Heart right ventricle (tissue), 16 donors: ENCODE measurements at regions of chr2 and their contacts with region 1.

Region 1: DNA sequence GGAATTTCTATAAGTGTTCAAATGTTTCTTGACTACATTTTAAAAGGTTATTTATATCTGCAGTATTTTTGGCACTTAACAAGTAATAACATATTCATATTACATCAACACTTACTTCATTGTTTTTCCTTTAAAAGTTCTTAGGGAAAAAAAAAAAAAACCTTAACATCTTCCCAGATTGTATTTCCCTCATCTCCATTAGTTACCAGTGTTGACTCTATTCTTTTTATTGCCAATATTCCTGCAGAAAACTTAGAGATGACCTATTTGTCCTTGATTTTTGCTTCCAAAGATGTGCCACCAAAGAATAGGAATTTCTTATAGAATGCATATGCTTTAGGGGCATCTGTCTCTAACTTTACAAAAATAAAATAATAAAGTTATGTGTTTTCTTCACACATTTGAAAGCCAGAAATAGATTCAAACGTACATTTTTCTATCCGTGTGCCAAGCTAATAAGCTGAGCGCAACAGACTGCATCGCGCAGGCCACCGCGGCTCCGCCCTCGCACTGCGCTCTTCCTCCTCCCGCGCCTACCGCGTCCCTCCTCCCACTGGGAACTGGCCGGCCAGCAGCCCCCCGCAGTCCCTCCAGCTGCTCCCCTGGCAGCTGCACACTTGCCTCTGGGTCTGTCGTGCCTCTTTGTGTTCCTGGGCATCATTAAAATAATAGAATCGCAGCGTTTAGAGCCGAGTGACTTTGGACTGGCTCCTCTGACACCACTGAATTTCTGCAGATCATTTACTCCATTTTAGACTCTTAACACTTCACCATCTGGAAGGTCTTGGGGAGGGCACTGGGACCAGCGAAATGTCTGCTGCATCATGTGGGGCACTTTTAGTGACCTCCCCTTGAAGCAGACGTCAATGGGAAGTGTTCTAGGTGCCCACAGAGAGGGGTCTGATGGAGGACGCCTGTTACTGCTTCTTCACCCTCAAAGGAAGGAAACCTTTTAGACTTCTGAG is 21.2 kb upstream of the NAB1 start:
- DNase-seq: peak; percentile 59 to 62
- ATAC-seq: peak; percentile 85 to 93 (median 90)
- H3K4me3 ChIP-seq: peak overlapping the region in 9 of 10 donors; percentile 33 to 60 (median 56)
- H3K27ac ChIP-seq: peak overlapping the region; percentile 66 to 89 (median 78)
- H3K4me1 ChIP-seq: peaks cover 0 to 36% (median 18%) of the 10 kb centered on the region in 9 donors
- H3K27me3 ChIP-seq: no peaks in the 10 kb centered on the region
- CTCF ChIP-seq: no peak

Region 2: DNA sequence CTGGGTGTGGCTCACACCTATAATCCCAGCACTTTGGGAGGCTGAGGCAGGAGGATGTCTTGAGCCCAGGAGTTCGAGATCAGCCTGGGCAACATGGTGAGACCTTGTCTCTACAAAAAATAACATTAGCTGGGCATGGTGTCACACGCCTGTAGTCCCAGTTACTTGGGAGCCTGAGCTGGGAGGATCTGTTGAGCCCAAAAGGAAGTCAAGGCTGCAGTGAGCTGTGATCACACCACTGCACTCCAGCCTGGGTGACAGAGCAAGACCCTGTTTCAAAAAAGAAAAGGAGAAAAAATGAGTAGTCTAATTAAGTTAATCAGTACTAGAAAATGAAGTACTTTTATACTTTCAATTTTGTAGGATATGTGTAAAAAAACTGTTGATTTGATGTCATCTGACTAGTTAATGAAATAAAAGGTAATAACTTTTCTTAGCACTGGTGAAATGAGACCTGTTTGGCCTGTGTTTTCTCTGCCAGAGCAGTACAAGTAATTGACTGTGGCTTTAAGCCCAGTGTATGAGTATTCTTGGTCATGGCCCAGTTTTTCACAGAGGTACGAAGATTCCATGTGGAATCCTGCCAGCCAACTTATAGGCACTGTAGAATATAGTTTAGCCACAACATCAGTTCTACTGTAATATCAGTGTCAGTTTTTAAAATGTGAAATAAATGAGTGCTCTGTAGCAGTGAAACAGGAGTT is 183.8 kb before region 1 on chr2:
- intact Hi-C with region 1: no loop called
- DNase-seq: no peak
- ATAC-seq: no peak
- H3K4me3 ChIP-seq: no peak overlapping the region
- H3K27ac ChIP-seq: peak overlapping the region in 1 of 10 donors; percentile 20
- H3K4me1 ChIP-seq: peaks cover 5 to 85% (median 39%) of the 10 kb centered on the region in 9 donors
- H3K27me3 ChIP-seq: no peaks in the 10 kb centered on the region
- CTCF ChIP-seq: no peak

Region 3: DNA sequence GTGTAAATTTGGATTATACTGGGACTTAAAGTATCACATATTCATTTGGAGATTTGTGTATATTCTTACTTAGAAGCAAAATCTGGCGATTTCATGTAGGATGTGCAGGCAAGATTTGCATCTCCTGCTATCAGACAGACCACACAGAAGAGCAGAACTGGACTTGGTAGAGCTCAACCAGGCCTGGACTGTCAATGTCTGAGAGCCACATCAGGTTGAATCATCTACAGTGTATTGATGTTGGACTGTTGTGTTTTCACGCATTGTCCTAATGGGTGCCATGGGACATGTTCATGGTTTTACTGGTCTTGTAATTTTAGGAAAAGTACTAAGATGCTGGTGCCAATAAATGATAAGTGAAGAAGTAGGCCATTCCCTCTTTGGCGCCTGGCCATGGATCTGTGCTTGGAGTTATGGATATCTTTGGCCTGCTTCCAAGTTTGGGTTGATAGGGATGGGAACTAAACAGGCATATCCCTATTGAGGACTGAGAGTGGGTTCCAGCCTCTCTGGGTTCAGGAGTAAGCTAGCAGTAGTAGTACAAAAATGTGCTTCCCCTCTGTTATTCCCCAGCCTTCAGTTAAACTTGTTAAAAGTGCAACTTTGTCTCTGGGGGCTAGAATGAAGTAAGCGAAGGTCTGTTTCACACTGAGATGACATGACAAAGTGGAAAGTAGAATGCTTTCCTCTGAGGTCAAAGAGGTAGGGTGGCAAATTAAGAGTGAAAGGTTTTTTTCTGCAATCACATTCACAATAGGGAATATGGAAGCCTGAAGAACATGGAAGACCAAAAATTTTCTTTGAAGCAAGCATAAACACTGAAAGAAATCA is 44.0 kb before region 1 on chr2:
- intact Hi-C with region 1: loop called in 1 of 10 experiments (anchors 5 kb)
- DNase-seq: peak; percentile 66 to 72
- ATAC-seq: peak; percentile 35 to 63 (median 53)
- H3K4me3 ChIP-seq: no peak overlapping the region
- H3K27ac ChIP-seq: peak overlapping the region in 8 of 10 donors; percentile 6 to 75 (median 58)
- H3K4me1 ChIP-seq: peaks cover 6 to 56% (median 32%) of the 10 kb centered on the region in 9 donors
- H3K27me3 ChIP-seq: no peaks in the 10 kb centered on the region
- CTCF ChIP-seq: no peak

Region 4: DNA sequence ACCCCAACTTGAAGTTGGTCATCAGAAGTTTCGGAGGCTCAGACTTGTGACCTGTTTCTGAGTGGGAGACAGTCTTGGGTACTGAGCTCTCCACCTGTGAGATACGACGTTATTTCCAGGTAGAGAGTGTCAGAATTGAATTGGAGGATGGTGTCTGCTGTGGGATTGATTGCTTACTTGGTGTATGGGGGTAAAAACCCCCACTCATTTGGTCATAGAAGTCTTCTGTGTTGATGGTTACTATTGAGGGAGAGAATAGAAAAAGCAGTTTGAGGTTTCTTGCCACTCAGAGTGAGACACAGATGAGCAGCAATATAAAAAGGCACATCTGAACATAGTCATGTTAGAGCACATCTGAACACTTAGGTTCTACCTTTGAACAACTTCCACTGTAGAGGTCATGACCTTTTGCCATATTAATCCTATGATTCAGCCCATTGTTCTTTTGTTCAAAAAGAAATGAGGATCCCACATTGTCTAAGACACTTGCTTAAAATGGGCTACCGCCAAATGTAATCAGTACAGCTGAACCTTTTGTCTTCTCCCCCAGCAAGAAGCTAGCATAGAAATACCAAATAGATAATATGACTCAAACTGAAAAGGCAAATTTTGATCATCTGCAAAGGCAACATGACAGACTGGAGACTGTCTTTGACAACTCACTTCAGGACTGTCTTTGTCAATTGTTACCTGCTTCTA is 94.5 kb after region 1 on chr2:
- intact Hi-C with region 1: no loop called
- DNase-seq: no peak
- ATAC-seq: peak in 1 of 8 donors; percentile 14
- H3K4me3 ChIP-seq: no peak overlapping the region
- H3K27ac ChIP-seq: peak overlapping the region in 5 of 10 donors; percentile 46 to 79 (median 66)
- H3K4me1 ChIP-seq: peaks cover 0 to 62% (median 16%) of the 10 kb centered on the region in 9 donors
- H3K27me3 ChIP-seq: no peaks in the 10 kb centered on the region
- CTCF ChIP-seq: no peak

Region 5: DNA sequence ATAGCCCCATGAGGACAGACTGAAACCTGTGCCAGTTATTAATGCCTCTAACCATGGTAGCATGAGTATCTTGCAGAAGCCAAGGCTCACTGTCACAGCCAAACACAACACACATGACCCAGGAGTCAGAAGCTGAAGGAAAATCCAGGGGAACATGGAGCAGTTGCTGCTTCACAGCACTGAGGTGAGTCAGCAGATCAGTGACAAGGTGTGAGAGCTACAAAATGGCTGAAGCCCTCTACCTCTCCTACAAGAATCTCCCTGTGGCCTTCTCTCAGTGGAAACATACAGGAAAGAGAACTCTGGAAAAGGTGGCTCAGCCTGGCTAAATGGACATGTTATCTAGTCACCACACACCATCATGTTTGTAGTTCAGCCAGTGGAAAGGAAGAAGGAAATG is 114.7 kb after region 1 on chr2:
- intact Hi-C with region 1: no loop called
- DNase-seq: no peak
- ATAC-seq: no peak
- H3K4me3 ChIP-seq: no peak overlapping the region
- H3K27ac ChIP-seq: no peak overlapping the region
- H3K4me1 ChIP-seq: peaks cover 0 to 10% (median 6%) of the 10 kb centered on the region in 9 donors
- H3K27me3 ChIP-seq: no peaks in the 10 kb centered on the region
- CTCF ChIP-seq: no peak

Region 6: GRCh38 chr2:191650896-191651773 is 1023.4 kb after region 1 on chr2:
- intact Hi-C with region 1: no loop called
- DNase-seq: no peak
- ATAC-seq: no peak
- H3K4me3 ChIP-seq: no peak overlapping the region
- H3K27ac ChIP-seq: no peak overlapping the region
- H3K4me1 ChIP-seq: peaks cover 0 to 9% (median 0%) of the 10 kb centered on the region in 9 donors
- H3K27me3 ChIP-seq: no peaks in the 10 kb centered on the region
- CTCF ChIP-seq: no peak